SK-N-SH (cell line): ENCODE measurements at regions of chr15 and their contacts with region 1.

Region 1: DNA sequence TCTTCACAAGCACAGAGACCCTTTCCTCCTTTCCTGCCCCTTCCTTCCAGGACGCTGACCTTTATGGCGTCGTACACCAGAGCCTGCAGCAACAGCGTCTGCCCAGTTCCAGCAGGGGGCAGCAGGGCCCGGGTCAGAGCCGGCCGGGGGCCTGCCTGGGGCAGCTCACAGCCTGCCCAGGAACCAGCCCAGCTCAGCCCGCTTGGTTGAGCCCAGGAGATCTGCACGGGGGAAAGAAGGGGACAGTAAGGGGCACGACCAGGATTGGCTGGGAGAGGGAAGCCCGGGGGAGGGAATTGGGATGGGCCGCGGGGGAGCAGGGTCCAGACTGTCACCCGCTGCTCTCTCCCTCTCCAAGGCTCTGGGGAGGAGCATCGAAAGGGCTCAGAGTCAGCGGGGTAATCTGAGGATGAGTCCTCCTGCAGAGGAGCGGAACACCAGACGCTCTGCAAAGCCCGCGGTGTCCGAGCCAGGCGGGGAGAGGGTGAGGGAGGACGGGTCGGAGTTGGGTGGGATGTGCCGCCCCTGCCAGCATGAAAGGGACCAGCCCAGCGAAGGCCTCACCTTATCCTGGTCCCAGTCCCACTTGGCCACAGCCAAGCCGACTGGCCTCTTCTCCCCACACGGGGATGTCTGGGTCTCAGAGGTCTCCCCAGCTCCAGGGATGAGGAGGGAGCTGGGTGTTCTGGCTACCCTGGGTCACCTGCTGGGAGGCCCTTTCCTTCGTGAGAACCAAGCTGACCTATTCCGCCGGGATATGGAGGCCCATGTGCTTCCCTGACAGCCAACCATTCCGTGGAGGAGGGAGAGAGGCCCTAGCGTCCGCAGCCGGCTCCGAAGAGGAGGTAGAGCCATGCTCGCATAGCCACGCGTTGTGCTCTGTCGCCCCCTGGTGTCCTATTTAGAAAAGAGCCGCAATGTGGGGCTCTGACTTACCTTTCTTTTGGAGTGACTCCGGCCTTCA is 7.4 kb upstream of the IGDCC3 start:
- DNase-seq: peak; percentile 93
- H3K4me3 ChIP-seq: peak overlapping the region; percentile 17 to 50; a peak in 2 of 4 replicates
- H3K27ac ChIP-seq: no peak overlapping the region
- H3K4me1 ChIP-seq: peaks cover 0 to 24% of the 10 kb centered on the region in 2 experiments; a peak in 1 of 4 replicates
- H3K27me3 ChIP-seq: peaks cover 3% of the 10 kb centered on the region; the same call in 1 of the 2 replicates
- CTCF ChIP-seq: peak; percentile 83
- EP300 ChIP-seq: no peak
- RAD21 ChIP-seq: peak; percentile 99

Region 2: DNA sequence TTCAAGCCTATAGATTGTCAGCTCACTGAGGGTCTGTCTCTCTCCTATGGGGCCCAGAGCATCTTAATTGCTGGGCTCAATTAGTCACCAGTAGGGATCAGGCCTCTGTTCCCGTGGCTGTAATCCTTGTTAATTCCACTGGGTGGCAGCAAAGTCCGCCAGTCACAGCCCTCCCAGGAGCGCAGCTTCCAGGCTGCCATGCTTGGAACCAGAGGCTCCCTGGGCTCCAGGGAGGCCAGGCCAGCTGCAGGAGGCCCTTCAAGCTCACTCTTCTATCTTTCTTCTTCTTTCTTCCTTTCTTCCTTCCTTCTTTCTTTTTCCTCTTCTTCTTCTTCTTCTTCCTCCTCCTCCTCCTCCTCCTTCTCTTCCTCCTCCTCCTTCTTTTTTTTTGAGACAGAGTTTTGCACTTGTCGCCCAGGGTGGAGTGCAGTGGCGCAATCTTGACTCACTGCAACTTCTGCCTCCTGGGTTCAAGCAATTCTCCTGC is 66.3 kb before region 1 on chr15:
- CTCF ChIA-PET with region 1: interaction called, 969 read pairs
- POLR2A ChIA-PET with region 1: no interaction called
- DNase-seq: peak; percentile 86
- H3K4me3 ChIP-seq: no peak overlapping the region; a peak in 1 of 4 replicates
- H3K27ac ChIP-seq: no peak overlapping the region
- H3K4me1 ChIP-seq: peaks cover 0 to 7% of the 10 kb centered on the region in 2 experiments; a peak in 1 of 4 replicates
- H3K27me3 ChIP-seq: peaks cover 12% of the 10 kb centered on the region; the same call in 1 of the 2 replicates
- CTCF ChIP-seq: peak; percentile 86
- EP300 ChIP-seq: no peak
- RAD21 ChIP-seq: peak; percentile 99

Region 3: GRCh38 chr15:65349338-65349737 is 35.8 kb before region 1 on chr15:
- CTCF ChIA-PET with region 1: interaction called, 12 read pairs
- POLR2A ChIA-PET with region 1: no interaction called
- DNase-seq: no peak
- H3K4me3 ChIP-seq: no peak overlapping the region
- H3K27ac ChIP-seq: no peak overlapping the region
- H3K4me1 ChIP-seq: peaks cover 0 to 6% of the 10 kb centered on the region in 2 experiments; a peak in 1 of 4 replicates
- H3K27me3 ChIP-seq: no peaks in the 10 kb centered on the region
- CTCF ChIP-seq: no peak
- EP300 ChIP-seq: no peak
- RAD21 ChIP-seq: no peak

Region 4: GRCh38 chr15:65400760-65401610 is 15.8 kb after region 1 on chr15:
- CTCF ChIA-PET with region 1: interaction called, 61 read pairs
- POLR2A ChIA-PET with region 1: no interaction called
- DNase-seq: peak; percentile 91
- H3K4me3 ChIP-seq: no peak overlapping the region; a peak in 1 of 4 replicates
- H3K27ac ChIP-seq: no peak overlapping the region
- H3K4me1 ChIP-seq: peaks cover 0 to 8% of the 10 kb centered on the region in 2 experiments; a peak in 1 of 4 replicates
- H3K27me3 ChIP-seq: peaks cover 11% of the 10 kb centered on the region
- CTCF ChIP-seq: peak; percentile 75
- EP300 ChIP-seq: no peak
- RAD21 ChIP-seq: peak; percentile 80

Region 5: DNA sequence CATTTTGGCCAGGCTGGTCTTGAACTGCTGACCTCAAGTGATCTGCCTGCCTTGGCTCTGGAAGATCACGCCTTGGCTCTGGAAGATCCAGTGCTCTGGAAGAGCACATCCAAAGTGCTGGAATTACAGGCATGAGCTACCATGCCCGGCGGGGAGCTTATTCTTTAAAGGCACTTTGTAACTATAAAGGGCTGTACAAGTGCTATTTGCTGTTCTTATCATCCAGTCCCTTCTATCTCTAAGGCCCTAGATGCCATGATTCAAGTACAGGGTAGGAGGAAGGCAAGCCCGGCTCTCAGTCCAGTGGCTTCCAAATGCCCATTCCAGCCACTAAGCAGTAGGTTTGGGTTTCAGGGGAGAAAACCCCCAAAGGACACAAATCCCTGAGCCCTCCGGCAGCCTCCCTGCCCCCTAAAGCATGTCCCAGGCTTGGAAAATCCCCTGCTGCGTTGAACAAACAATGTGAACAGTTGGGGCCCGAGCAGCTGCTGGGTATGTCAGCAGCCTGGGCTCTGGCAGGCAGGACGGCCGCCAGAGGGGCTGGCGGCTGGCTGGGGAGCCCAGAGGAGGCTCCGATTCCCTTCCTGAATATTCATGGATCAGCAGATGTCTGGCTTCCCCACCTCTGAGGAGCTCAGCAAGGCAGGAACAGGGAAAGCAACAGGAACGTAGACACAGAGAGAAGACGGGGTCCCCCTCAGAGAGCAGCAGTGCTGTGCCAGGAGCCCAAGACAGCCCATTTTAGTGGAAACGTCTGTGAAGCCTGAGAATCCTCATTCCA is 29.9 kb after region 1 on chr15:
- CTCF ChIA-PET with region 1: interaction called, 10 read pairs
- POLR2A ChIA-PET with region 1: no interaction called
- DNase-seq: no peak
- H3K4me3 ChIP-seq: no peak overlapping the region
- H3K27ac ChIP-seq: no peak overlapping the region
- H3K4me1 ChIP-seq: peaks cover 4% of the 10 kb centered on the region in 2 experiments; a peak in 2 of 4 replicates
- H3K27me3 ChIP-seq: no peaks in the 10 kb centered on the region
- CTCF ChIP-seq: no peak
- EP300 ChIP-seq: no peak
- RAD21 ChIP-seq: no peak